IMR-90 (cell line): ENCODE measurements at regions of chr9 and their contacts with region 1.

Region 1: GRCh38 chr9:105244003-105244733 is at the start of gene SLC44A1:
- DNase-seq: peak; percentile 92
- ATAC-seq: peak; percentile 98
- H3K4me3 ChIP-seq: peak within 1 kb of the TSS; percentile 63
- H3K27ac ChIP-seq: peak within 1 kb of the TSS; percentile 24
- H3K4me1 ChIP-seq: no peaks in the 10 kb centered on the region; the same call in 1 of the 2 replicates
- H3K27me3 ChIP-seq: no peaks in the 10 kb centered on the region
- CTCF ChIP-seq: no peak
- POLR2A ChIP-seq: no peak
- RAD21 ChIP-seq: peak; percentile 28; the same call in 1 of the 2 replicates
- total RNA-seq, gene SLC44A1: 19.4 and 21.7 TPM in 2 replicates

Region 2: DNA sequence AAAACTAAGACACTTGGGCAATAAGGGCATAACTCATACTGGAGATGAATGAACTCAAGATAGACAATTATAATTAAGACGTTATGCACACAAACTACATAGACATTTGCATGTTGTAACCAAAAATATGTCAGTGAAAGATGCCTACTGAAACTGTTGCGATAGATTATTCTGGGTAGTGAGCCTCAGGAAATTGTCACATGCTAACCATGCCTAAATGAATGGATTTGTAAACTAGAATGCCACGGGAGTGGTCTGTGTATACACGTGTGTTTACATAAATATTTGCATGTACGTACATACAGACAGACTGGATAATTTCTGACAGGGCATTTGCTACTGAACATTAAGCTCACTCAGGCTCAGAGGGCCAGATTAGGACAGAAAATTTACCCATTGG is 479.0 kb before region 1 on chr9:
- CTCF ChIA-PET with region 1: no interaction called
- POLR2A ChIA-PET with region 1: no interaction called
- dilution Hi-C with region 1: no loop called
- in situ Hi-C with region 1: no loop called
- intact Hi-C with region 1: loop called (anchors 10 kb)
- DNase-seq: no peak
- ATAC-seq: no peak
- H3K4me3 ChIP-seq: no peak overlapping the region
- H3K27ac ChIP-seq: no peak overlapping the region
- H3K4me1 ChIP-seq: no peaks in the 10 kb centered on the region
- H3K27me3 ChIP-seq: no peaks in the 10 kb centered on the region
- CTCF ChIP-seq: no peak
- POLR2A ChIP-seq: no peak
- RAD21 ChIP-seq: no peak

Region 3: DNA sequence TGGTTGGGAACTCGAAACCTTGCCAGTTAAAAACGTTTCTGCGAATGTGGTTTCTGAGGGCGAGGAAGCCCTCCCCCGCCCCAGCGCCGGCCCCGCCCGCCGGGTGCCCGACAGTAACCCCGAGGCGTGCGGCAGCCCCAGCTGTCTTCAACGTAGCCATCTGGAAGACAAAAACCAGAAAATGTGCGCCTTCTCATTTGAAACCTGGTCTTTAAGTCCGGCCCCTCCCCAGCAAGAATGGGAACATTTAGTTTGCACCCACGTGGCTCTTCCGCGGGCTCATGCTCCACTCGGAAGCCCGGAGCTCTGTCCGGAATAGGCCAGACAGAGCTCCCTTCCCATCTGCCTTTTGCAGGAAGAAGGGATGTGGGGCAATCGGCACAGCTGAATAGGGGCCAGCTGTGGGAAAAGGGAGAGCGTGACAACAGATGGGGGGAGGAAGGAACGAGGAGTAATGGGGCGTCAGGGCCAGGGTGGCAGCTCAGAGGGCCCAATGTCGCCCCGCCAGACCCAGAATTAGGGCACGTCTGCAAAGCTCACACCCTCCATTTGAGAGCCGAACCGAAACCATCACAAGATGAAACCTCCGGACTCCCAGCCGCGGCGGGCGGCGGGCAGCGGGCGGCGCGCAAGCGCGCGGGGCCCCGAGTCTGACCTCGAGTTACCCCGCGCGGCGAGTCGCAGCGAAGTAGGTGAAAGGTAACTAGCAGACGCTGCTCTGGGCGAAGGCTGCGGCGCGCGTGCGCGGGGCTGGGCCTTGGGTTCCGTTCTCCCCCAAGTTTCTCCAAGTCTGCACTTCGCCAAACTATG is 252.8 kb before region 1 on chr9:
- CTCF ChIA-PET with region 1: no interaction called
- POLR2A ChIA-PET with region 1: no interaction called
- dilution Hi-C with region 1: no loop called
- in situ Hi-C with region 1: no loop called
- intact Hi-C with region 1: loop called (anchors 10 kb)
- DNase-seq: peak; percentile 82
- ATAC-seq: peak; percentile 85
- H3K4me3 ChIP-seq: peak overlapping the region; percentile 65
- H3K27ac ChIP-seq: peak overlapping the region; percentile 98
- H3K4me1 ChIP-seq: peaks cover 25% of the 10 kb centered on the region
- H3K27me3 ChIP-seq: no peaks in the 10 kb centered on the region
- CTCF ChIP-seq: no peak
- POLR2A ChIP-seq: peak; percentile 37; the same call in 1 of the 2 replicates
- RAD21 ChIP-seq: peak; percentile 27

Region 4: DNA sequence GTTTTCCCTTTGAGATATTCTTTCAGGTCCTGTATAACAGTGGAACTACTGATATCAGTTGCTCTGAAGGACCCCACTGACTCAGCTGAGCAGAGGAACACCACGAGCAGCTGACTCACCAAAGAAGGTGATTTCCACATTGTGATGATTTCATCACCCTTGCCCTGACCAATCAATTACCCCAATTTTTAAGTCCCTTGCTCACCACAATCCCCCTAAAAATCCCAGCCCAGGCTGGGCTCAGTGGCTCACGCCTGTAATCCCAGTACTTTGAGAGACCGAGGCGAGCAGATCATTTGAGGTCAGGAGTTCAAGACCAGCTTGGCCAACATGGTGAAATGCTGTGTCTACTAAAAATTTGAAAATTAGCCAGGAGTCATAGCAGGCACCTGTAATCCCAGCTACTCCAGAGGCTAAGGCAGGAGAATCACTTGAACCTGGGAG is 190.9 kb before region 1 on chr9:
- CTCF ChIA-PET with region 1: no interaction called
- POLR2A ChIA-PET with region 1: no interaction called
- dilution Hi-C with region 1: no loop called
- in situ Hi-C with region 1: no loop called
- intact Hi-C with region 1: loop called (anchors 10 kb)
- DNase-seq: peak; percentile 94
- ATAC-seq: peak; percentile 57
- H3K4me3 ChIP-seq: no peak overlapping the region
- H3K27ac ChIP-seq: no peak overlapping the region
- H3K4me1 ChIP-seq: peaks cover 15% of the 10 kb centered on the region
- H3K27me3 ChIP-seq: no peaks in the 10 kb centered on the region
- CTCF ChIP-seq: no peak
- POLR2A ChIP-seq: no peak
- RAD21 ChIP-seq: no peak

Region 5: DNA sequence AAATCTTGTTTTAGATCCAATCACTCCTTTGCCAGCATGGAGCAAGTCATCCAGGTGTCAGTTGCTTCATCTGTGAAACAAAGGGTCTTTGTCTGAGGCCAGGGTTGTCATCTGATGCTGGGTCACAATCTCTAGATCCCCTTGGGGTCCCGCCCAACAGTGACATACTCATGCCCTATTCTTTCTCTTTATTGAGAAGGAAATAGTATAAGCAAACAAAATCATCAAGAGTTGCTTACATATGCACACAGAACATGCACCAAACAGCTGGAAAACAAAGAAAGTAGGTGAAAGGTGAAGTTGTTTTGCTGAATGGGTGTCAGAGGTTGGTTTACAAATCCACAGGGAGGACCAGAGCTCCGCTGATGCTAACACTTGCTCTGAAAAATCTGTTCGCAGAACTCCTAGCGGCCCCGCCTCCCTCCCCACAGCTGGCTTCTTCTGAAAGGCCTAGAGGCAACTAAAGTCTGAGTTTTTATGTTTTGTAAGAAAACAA is 105.8 kb before region 1 on chr9:
- CTCF ChIA-PET with region 1: no interaction called
- POLR2A ChIA-PET with region 1: no interaction called
- dilution Hi-C with region 1: no loop called
- in situ Hi-C with region 1: no loop called
- intact Hi-C with region 1: no loop called
- DNase-seq: no peak
- ATAC-seq: peak; percentile 56
- H3K4me3 ChIP-seq: no peak overlapping the region
- H3K27ac ChIP-seq: no peak overlapping the region
- H3K4me1 ChIP-seq: no peaks in the 10 kb centered on the region; the same call in 1 of the 2 replicates
- H3K27me3 ChIP-seq: 0 out of 2 replicates have a peak, but pooled peaks cover 2% of the 10 kb centered on the region
- CTCF ChIP-seq: no peak
- POLR2A ChIP-seq: no peak
- RAD21 ChIP-seq: no peak

Region 6: DNA sequence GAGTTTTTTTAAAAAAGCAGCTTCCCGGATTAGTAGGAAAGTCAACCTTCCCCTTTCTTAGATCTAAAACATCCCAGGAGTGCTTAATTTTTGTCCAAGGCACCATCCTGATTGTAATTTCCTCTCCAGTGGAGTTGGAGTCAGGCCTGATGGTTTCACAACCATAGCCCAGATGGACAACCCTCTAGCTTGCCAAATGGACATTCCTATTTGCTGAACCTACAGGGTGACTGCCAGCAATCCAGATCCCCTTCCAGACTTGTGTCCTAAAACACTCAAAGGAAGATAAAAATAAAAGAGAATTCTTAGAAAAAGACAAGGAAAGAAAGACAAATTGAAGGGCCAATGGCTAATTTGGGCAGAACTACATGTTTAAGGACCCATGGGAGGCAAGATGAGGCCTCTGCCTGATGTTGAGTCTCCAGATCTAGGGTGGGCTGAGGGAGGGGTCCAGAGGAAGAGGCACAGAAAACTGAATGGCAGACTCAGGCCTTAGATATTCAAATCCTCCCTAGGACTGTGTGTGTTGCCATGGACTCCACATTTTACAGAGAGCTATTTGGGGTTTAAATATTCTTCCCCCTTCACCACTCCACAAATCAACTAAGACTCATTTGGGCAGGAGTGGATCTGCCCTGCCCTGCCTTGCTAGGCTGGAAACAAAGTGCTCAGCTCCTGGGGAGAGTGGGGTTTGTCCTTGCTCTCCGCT is 38.2 kb before region 1 on chr9:
- CTCF ChIA-PET with region 1: no interaction called
- POLR2A ChIA-PET with region 1: no interaction called
- dilution Hi-C with region 1: no loop called
- in situ Hi-C with region 1: no loop called
- intact Hi-C with region 1: no loop called
- DNase-seq: peak; percentile 94
- ATAC-seq: peak; percentile 93
- H3K4me3 ChIP-seq: no peak overlapping the region
- H3K27ac ChIP-seq: peak overlapping the region; percentile 86; the same call in 1 of the 2 replicates
- H3K4me1 ChIP-seq: peaks cover 9% of the 10 kb centered on the region
- H3K27me3 ChIP-seq: no peaks in the 10 kb centered on the region
- CTCF ChIP-seq: no peak
- POLR2A ChIP-seq: no peak
- RAD21 ChIP-seq: no peak

Region 7: DNA sequence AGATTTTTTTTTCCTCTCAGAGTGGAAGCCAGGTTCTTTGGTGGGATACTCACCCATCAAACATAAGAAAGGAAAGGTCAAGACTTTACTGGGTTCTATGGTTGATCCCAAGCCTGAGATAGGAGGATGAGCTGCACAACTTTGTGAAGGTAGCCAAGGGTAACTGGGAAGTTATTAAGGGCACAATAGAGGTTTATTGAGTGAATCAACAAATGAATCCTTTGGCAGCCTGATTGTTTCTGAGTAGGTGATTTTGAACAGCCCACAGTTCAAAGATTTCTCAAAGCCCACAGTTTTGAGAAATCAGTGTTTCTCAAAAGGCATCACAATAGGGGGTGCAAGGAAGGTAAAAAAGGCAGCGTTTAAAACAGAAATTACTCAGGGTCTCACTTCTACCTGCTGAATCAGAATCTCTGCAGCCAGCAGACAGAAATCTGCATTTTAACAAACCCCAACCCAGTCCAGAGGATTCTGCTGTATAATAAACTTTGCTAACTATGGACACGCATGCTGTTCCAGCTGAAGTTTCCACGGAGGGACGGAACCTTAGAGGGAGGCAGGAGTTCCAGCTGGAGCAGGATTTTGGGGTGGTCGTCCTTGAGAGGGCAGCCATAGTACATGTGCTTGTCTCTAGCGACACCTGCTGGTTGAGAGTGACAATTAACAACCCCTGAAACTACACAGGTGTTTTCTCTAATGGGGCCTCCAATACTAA is 170.9 kb after region 1 on chr9:
- CTCF ChIA-PET with region 1: no interaction called
- POLR2A ChIA-PET with region 1: no interaction called
- dilution Hi-C with region 1: no loop called
- in situ Hi-C with region 1: loop called (anchors 10 kb)
- intact Hi-C with region 1: loop called (anchors 2 kb)
- DNase-seq: peak; percentile 55
- ATAC-seq: peak; percentile 70
- H3K4me3 ChIP-seq: no peak overlapping the region
- H3K27ac ChIP-seq: no peak overlapping the region
- H3K4me1 ChIP-seq: peaks cover 6% of the 10 kb centered on the region
- H3K27me3 ChIP-seq: no peaks in the 10 kb centered on the region
- CTCF ChIP-seq: peak; percentile 77
- POLR2A ChIP-seq: no peak
- RAD21 ChIP-seq: peak; percentile 97